Spleen (tissue), 13 donors: ENCODE measurements at regions of chr18 and their contacts with region 1.

Region 1: GRCh38 chr18:46909497-46909896 is 7.8 kb downstream of the PIAS2 start:
- DNase-seq: no peak
- H3K4me3 ChIP-seq: no peak overlapping the region
- H3K27ac ChIP-seq: no peak overlapping the region
- H3K4me1 ChIP-seq: peaks cover 0 to 9% (median 0%) of the 10 kb centered on the region in 6 donors
- H3K27me3 ChIP-seq: no peaks in the 10 kb centered on the region
- CTCF ChIP-seq: no peak
- POLR2A ChIP-seq: no peak

Region 2: DNA sequence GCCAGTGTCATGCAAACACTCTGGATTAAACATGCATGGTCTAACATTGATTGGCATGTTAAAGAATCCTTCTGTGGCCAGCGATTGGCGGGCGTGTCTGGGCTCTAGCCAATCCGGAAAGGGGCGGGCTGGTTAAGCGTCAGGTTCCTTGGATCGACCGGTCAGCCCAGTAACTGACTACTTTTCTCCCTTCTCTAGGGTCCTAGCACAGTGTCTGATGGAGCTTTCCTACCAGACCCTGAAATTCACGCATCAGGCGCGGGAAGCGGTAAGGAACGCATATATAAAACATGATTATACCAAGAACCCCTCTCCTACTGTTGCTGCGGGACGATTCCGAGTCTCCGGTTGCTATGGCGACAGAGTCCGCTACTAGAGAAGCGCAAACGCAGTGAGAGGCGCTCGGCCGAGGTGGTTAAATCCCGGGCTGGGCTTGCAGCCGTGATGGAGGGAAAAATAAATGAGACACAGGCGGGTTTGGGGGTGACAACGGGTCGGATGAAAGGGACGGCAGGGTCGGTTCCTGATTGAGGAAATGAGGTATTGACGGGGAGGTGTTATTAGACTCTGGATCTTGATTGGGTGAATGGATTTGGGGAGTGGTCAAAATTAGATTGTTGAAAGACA is 37.3 kb after region 1 on chr18:
- intact Hi-C with region 1: no loop called
- DNase-seq: peak; percentile 87
- H3K4me3 ChIP-seq: peak overlapping the region; percentile 51 to 83 (median 62)
- H3K27ac ChIP-seq: no peak overlapping the region
- H3K4me1 ChIP-seq: peaks cover 0 to 14% (median 0%) of the 10 kb centered on the region in 6 donors
- H3K27me3 ChIP-seq: peaks cover 0 to 17% (median 0%) of the 10 kb centered on the region in 7 donors
- CTCF ChIP-seq: no peak
- POLR2A ChIP-seq: no peak

Region 3: GRCh38 chr18:47883771-47884413 is 974.4 kb after region 1 on chr18:
- intact Hi-C with region 1: loop called (anchors 10 kb)
- DNase-seq: no peak
- H3K4me3 ChIP-seq: no peak overlapping the region
- H3K27ac ChIP-seq: no peak overlapping the region
- H3K4me1 ChIP-seq: peaks cover 0 to 4% (median 0%) of the 10 kb centered on the region in 6 donors
- H3K27me3 ChIP-seq: no peaks in the 10 kb centered on the region
- CTCF ChIP-seq: no peak
- POLR2A ChIP-seq: no peak